Activated CD8-positive, alpha-beta T cell treated with anti-CD3 and anti-CD28 coated beads for 36 hours (primary cell): ENCODE measurements at regions of chr12 and their contacts with region 1.

Region 1: GRCh38 chr12:132986001-132986912 is at the start of gene ZNF26:
- DNase-seq: peak; percentile 92
- ATAC-seq: peak; percentile 96
- H3K4me3 Mint-ChIP-seq: peak within 1 kb of the TSS; percentile 80
- H3K27ac Mint-ChIP-seq: peak within 1 kb of the TSS; percentile 92
- H3K4me1 Mint-ChIP-seq: peaks cover 26% of the 10 kb centered on the region
- H3K27me3 Mint-ChIP-seq: peaks cover 5% of the 10 kb centered on the region
- CTCF ChIP-seq: no peak
- total RNA-seq, gene ZNF26: 19.1 to 19.8 TPM

Region 2: DNA sequence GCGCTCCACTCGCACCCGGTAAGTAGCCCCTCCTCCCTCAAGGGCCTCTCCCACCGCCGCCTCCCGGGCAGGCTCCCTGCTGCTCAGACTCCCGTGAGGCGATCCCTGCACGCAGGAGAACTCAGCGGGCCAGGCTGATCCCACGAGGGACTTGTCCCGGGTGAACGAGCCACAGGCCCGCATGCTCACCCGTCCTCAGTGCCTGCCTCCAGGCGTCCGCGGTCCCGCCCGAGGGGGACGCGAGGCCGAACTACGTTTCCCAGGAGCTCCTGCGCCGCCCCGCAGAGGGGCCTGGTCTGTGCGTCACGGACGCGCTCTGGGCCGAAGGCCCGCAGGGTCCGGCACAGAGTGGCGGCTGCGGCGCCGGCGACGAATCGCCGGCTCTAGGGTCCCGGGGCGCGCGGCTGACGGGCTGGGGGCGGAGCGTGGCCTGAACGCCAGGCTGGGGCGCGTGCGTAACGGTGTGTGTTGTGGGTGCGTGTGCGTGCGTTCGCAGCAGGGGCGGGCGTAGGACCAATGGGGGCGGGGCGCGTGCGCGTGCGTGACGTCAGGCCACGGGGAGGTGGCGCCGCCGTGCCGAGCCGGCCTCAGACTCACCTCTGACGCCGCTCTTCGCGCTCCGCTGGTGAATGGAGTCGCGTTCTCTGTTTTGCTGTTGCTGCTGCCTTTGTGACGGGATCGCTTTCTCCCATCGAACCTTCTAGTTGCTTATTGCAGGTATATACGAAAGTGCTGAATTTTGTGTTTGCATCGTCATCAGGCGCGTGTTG is 144.0 kb after region 1 on chr12 and contains the starts of genes ZNF10 and ZNF891:
- CTCF ChIA-PET with region 1: no interaction called
- POLR2A ChIA-PET with region 1: interaction called, 17 read pairs
- intact Hi-C with region 1: no loop called
- DNase-seq: peak; percentile 97
- ATAC-seq: peak; percentile 93
- H3K4me3 Mint-ChIP-seq: peak within 1 kb of the TSS; percentile 89
- H3K27ac Mint-ChIP-seq: peak within 1 kb of the TSS; percentile 99
- H3K4me1 Mint-ChIP-seq: peaks cover 12% of the 10 kb centered on the region
- H3K27me3 Mint-ChIP-seq: no peaks in the 10 kb centered on the region
- CTCF ChIP-seq: no peak
- total RNA-seq, gene ZNF10: 6.0 to 7.2 TPM
- total RNA-seq, gene ZNF891: 1.7 to 1.8 TPM